ENCODE measurements at regions of chr9 and their contacts with region 1.

Region 1: GRCh38 chr9:127916665-127917613 is at the start of gene ST6GALNAC4:
- DNase-seq: peak; percentile 97
- H3K4me3 Mint-ChIP-seq: peak within 1 kb of the TSS; percentile 83
- H3K27ac Mint-ChIP-seq: peak within 1 kb of the TSS; percentile 84
- H3K4me1 Mint-ChIP-seq: peaks cover 50% of the 10 kb centered on the region
- H3K27me3 Mint-ChIP-seq: no peaks in the 10 kb centered on the region
- total RNA-seq, gene ST6GALNAC4: 22.3 to 24.6 TPM

Region 2: DNA sequence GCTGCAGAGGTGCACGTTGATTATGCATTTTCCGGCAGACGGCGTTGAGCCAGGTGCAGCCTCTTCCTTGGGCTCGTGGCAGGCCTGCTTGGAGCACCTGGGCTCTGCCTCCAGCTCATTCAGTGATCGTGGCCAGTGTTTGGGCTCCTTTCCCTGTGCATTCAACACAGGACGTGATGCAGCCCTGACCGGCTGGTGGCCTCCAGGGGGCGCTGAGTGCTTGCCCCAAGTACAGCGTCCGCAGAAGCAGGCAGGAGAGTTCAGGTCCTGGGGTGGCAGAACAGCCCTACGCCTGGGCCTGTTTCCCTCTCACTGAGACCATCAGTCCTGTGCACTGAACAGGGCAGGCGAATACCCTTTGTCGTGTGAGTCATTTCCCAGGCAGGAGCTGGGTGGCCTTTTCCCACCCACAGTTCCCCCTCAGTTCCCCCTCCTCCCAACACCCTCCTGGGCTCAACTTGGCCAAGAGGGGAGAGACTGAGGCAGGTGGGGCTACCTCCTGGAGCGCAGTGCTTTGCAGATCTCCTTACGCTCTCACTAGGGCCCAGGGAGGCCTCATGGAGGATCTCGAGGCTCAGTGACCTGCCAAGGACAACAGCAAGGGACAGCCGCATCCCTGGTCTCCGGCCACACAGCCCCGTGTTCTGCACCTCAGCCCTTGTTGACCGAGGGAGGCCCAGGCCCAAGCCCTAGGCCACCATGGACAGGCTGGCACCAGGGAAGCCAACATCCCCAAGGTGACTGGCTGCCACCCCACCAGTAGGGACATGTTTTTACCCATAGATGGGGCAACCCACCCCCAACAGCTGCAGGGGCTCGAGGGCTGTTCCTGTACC is 412.8 kb before region 1 on chr9:
- CTCF ChIA-PET with region 1: no interaction called
- intact Hi-C with region 1: loop called (anchors 5 kb)
- DNase-seq: peak; percentile 88
- H3K4me3 Mint-ChIP-seq: no peak overlapping the region
- H3K27ac Mint-ChIP-seq: no peak overlapping the region
- H3K4me1 Mint-ChIP-seq: no peaks in the 10 kb centered on the region
- H3K27me3 Mint-ChIP-seq: no peaks in the 10 kb centered on the region

Region 3: DNA sequence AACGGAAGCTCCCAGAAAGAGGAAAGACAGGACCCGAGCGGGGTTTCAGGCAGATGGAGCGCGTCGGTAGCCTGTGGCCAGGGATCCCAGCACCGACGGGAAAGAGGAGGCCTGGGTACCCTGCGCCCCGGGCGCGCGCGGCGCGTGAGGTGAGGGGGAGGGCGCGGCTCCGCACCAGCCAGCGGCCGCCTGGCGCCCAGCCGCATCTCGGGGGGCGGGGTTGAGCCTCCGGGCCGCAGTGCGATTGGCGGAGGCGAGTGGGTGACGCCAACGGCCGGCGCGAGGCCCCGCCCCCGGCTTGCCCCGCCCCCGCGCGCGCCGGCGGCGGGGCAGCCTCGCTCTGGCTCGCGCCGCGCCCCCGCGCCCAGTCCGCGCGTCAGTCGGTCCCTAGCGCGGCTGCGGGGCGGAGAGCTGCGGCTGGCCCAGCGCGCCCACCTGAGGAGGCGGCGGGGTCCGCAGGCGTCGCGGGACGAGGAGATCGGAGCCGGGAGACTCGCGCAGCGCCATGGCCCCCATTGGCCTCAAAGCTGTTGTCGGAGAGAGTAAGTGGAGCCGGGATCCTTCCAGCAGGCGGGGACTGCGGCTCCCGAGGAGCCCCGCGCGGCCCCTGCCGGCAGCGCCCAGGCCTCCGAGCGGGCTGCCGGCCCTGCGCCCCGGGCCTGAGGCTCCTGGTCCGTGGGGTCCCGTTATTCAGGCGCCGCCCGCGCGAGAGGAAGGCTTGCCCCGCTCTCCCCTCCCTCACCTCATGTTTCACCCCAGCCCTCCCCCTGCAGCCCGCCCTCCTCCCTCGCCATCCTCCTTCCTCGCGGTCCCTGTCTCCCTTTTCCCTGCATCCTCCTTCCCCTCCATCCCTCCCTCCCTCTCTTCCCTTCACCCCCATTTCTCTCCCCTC is 304.8 kb before region 1 on chr9 and contains the start of gene STXBP1:
- CTCF ChIA-PET with region 1: no interaction called
- intact Hi-C with region 1: loop called (anchors 5 kb)
- DNase-seq: peak; percentile 86
- H3K4me3 Mint-ChIP-seq: peak within 1 kb of the TSS; percentile 94
- H3K27ac Mint-ChIP-seq: no peak within 1 kb of the TSS
- H3K4me1 Mint-ChIP-seq: peaks cover 21% of the 10 kb centered on the region
- H3K27me3 Mint-ChIP-seq: peaks cover 15% of the 10 kb centered on the region
- total RNA-seq, gene STXBP1: 17.4 to 17.8 TPM

Region 4: GRCh38 chr9:127770905-127771569 is 145.9 kb before region 1 on chr9:
- CTCF ChIA-PET with region 1: no interaction called
- intact Hi-C with region 1: loop called (anchors 1 kb)
- DNase-seq: peak; percentile 99
- H3K4me3 Mint-ChIP-seq: peak overlapping the region; percentile 90
- H3K27ac Mint-ChIP-seq: peak overlapping the region; percentile 91
- H3K4me1 Mint-ChIP-seq: peaks cover 62% of the 10 kb centered on the region
- H3K27me3 Mint-ChIP-seq: no peaks in the 10 kb centered on the region

Region 5: DNA sequence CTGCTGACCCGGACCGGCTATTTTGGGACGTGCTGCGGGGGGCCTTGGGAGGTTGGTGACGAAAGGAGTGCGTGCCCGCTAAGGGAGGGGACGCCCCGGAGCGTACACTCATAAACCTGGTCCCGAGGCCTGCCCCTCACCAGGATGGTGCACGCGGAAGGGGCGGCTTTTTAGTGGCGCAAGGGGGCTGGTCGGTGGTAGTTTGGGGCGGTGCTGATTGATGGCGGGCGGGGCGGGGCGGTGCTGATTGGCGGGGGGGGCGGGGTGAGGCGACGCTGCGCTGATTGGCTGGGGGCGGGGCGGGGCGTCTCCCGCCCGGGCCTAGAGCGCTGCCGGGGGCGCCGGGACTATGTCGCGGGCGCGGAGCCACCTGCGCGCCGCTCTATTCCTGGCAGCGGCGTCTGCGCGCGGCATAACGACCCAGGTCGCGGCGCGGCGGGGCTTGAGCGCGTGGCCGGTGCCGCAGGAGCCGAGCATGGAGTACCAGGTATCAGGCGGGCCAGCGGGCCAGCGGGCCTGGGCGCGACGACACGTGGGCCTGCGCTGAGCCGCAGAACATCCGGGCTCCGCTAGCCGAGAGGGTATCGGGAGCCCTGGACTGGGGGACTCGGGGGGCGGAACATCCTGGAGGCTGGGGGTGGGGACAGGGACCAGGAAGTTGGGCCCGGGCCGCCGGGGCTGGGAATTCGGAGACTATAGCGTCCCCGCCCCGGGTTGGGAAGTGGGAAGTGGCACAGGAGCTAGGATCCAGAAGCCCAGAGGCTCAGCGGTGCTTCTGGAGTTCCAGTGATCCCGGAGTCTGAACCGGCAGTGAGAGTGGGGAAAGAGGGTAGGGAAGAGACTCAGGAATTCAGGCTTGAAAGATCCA is 114.1 kb before region 1 on chr9 and contains the start of gene FPGS:
- CTCF ChIA-PET with region 1: interaction called, 3 read pairs
- intact Hi-C with region 1: loop called (anchors 2 kb)
- DNase-seq: peak; percentile 92
- H3K4me3 Mint-ChIP-seq: peak within 1 kb of the TSS; percentile 96
- H3K27ac Mint-ChIP-seq: peak within 1 kb of the TSS; percentile 84
- H3K4me1 Mint-ChIP-seq: peaks cover 29% of the 10 kb centered on the region
- H3K27me3 Mint-ChIP-seq: no peaks in the 10 kb centered on the region
- total RNA-seq, gene FPGS: 67.8 to 73.0 TPM

Region 6: GRCh38 chr9:127884427-127884911 is 32.5 kb before region 1 on chr9:
- CTCF ChIA-PET with region 1: interaction called, 6 read pairs
- intact Hi-C with region 1: loop called (anchors 5 kb)
- DNase-seq: no peak
- H3K4me3 Mint-ChIP-seq: no peak overlapping the region
- H3K27ac Mint-ChIP-seq: no peak overlapping the region
- H3K4me1 Mint-ChIP-seq: no peaks in the 10 kb centered on the region
- H3K27me3 Mint-ChIP-seq: no peaks in the 10 kb centered on the region

Region 7: DNA sequence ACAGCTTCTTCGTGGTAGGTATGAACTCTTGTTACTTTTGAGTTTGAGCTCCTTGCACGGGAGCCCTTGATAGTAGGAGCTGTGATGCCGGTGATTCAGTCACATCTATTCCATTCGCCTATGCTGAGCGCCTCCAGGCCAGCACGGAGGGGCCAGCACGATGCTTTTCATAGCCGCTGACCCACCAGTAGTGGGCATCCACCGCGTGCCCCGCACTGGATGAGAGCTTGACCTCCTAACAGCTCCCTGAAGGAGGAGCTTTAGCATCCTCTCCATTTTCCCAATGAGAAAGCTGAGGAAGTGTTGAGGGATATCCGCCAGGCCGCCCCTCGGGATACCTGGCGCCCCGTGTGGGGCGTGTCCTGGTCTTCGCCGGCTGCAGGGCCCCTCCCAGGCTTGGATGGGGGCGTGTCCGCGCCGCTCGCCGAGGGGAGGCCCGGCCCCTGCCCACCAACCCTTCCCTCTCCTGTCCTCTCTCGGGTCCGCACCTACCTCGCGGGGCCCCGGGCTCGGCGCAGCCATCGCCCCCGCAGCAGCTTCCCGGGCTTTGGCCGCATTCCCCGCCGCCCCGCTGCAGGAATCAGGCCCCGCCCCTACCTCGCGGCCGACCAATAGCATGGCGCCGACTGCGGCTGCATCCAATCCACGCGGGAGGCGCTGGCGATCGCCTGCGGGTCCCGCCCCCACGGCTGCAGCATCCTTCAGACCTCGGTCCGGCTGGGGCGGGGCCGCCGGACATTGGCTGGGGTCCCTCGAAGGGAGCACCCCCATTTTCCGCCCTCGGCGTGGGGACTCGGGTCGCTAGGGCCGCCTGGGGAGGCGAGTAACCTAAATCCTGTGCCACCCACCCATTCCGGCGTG is 13.5 kb after region 1 on chr9 and contains the start of gene PIP5KL1:
- CTCF ChIA-PET with region 1: interaction called, 4 read pairs
- intact Hi-C with region 1: loop called (anchors 1 kb)
- DNase-seq: peak; percentile 61
- H3K4me3 Mint-ChIP-seq: peak within 1 kb of the TSS; percentile 62
- H3K27ac Mint-ChIP-seq: no peak within 1 kb of the TSS
- H3K4me1 Mint-ChIP-seq: peaks cover 35% of the 10 kb centered on the region
- H3K27me3 Mint-ChIP-seq: peaks cover 6% of the 10 kb centered on the region
- total RNA-seq, gene PIP5KL1: 1.1 to 1.8 TPM

Region 8: GRCh38 chr9:128007566-128008138 is 90.7 kb after region 1 on chr9:
- CTCF ChIA-PET with region 1: no interaction called
- intact Hi-C with region 1: no loop called
- DNase-seq: peak; percentile 97
- H3K4me3 Mint-ChIP-seq: peak overlapping the region; percentile 85
- H3K27ac Mint-ChIP-seq: peak overlapping the region; percentile 94
- H3K4me1 Mint-ChIP-seq: peaks cover 52% of the 10 kb centered on the region
- H3K27me3 Mint-ChIP-seq: no peaks in the 10 kb centered on the region